Activated naive CD4-positive, alpha-beta T cell treated with anti-CD3 and anti-CD28 coated beads for 36 hours (primary cell): ENCODE measurements at regions of chr16 and their contacts with region 1.

Region 1: GRCh38 chr16:25014500-25015147 is 545 bp downstream of the ARHGAP17 start:
- DNase-seq: peak; percentile 47
- H3K4me3 Mint-ChIP-seq: peak overlapping the region; percentile 89
- H3K27ac Mint-ChIP-seq: peak overlapping the region; percentile 88
- H3K4me1 Mint-ChIP-seq: peaks cover 79% of the 10 kb centered on the region
- H3K27me3 Mint-ChIP-seq: no peaks in the 10 kb centered on the region

Region 2: GRCh38 chr16:23952128-23952970 is 1062.3 kb before region 1 on chr16:
- CTCF ChIA-PET with region 1: no interaction called
- intact Hi-C with region 1: loop called (anchors 5 kb)
- DNase-seq: peak; percentile 60
- H3K4me3 Mint-ChIP-seq: peak overlapping the region; percentile 13
- H3K27ac Mint-ChIP-seq: peak overlapping the region; percentile 3
- H3K4me1 Mint-ChIP-seq: peaks cover 78% of the 10 kb centered on the region
- H3K27me3 Mint-ChIP-seq: no peaks in the 10 kb centered on the region

Region 3: DNA sequence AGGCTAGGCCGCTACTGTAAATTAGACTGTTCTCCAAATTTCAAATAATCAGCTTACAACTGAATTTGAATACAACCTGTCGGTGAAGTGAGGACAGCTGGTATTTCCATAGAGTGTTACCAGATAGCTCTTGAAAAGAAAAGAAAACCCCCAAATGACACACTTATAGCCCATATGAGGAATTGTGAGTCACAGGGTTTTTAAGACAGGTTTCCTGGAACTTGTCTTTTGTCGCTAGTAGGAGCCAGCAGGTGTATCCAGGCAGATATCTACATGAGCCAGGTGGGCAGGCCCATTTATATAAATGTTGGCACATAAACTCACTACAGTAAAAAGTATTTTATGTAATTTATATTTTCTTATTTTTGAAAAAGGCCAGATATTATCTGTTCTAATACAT is 261.2 kb before region 1 on chr16:
- CTCF ChIA-PET with region 1: no interaction called
- intact Hi-C with region 1: loop called (anchors 10 kb)
- DNase-seq: peak; percentile 65
- H3K4me3 Mint-ChIP-seq: peak overlapping the region; percentile 1
- H3K27ac Mint-ChIP-seq: peak overlapping the region; percentile 87
- H3K4me1 Mint-ChIP-seq: peaks cover 66% of the 10 kb centered on the region
- H3K27me3 Mint-ChIP-seq: no peaks in the 10 kb centered on the region

Region 4: GRCh38 chr16:24993722-24994686 is 20.6 kb before region 1 on chr16:
- CTCF ChIA-PET with region 1: interaction called, 3 read pairs
- intact Hi-C with region 1: loop called (anchors 2 kb)
- DNase-seq: no peak
- H3K4me3 Mint-ChIP-seq: no peak overlapping the region
- H3K27ac Mint-ChIP-seq: no peak overlapping the region
- H3K4me1 Mint-ChIP-seq: peaks cover 82% of the 10 kb centered on the region
- H3K27me3 Mint-ChIP-seq: no peaks in the 10 kb centered on the region

Region 5: DNA sequence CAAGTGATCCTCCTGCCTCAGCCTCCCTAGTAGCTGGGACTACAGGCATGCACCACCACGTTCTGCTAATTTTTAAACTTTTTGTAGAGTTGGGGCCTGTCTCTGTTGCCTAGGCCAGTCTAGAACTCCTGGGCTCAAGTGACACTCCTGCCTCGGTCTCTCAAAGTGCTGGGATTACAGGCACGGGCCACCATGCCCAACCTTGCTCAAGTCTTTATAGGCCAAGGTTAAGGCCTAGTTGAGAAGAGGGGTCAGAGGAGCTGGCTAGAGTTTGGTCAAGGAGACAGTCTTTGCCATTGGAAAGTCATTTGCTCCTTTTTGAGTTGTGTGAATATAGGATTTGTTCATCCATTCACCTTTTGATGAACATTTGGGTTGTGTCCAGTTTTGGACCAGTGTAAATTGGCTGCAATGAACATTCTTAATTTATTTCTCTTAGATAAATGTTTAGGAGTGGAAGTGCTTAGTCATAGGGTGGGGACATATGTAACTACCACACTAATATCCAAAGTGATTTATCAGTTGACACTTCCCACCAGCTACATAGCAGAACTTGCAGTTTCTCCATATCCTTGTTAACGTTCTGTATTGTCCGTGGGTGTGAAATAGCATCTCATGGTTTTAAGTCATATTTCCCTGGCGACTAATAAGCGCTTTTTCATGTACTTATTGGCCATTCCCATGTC is 31.2 kb after region 1 on chr16:
- CTCF ChIA-PET with region 1: interaction called, 8 read pairs
- intact Hi-C with region 1: loop called (anchors 1 kb)
- DNase-seq: no peak
- H3K4me3 Mint-ChIP-seq: no peak overlapping the region
- H3K27ac Mint-ChIP-seq: peak overlapping the region; percentile 8
- H3K4me1 Mint-ChIP-seq: peaks cover 55% of the 10 kb centered on the region
- H3K27me3 Mint-ChIP-seq: no peaks in the 10 kb centered on the region